Ovary (tissue), 10 donors: ENCODE measurements at regions of chr11 and their contacts with region 1.

Region 1: DNA sequence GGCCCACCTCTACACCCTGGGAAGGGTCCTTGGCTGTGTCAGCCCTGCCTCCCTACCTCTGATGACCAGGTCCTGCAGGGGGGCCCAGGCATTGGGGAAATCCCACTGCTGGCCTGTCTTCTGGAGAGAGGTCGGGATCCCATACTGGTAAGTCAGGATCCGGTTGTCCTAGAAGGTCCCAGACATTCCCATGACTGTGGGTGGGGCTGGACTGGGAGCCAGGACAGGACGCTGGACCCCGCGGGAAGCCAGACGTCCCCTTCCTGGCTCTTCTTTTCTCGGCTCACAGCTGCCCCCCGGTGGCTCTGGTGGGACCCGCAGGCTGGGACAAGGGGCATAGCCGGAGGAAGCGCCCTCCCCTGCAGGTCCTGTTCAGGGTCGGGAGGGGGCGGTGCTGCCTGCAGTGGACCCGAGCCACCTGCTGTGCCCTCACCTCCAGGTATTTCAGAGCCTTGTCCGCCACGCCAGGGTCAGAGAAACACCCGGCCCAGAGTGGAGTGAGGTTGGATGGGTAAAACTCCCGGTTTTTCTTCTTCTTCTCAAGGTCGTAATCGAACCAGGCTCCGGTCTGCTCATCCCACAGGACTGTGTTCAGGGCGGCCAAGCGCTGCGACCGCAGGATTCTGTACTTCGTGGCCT is 20.0 kb downstream of the TREH start:
- DNase-seq: peak; percentile 90 to 96 (median 95)
- H3K4me3 ChIP-seq: peak overlapping the region; percentile 3
- H3K27ac ChIP-seq: peak overlapping the region; percentile 40 to 58
- H3K4me1 ChIP-seq: no peaks in the 10 kb centered on the region
- H3K27me3 ChIP-seq: no peaks in the 10 kb centered on the region
- CTCF ChIP-seq: peak; percentile 94 to 97 (median 95)
- EP300 ChIP-seq: no peak
- POLR2A ChIP-seq: no peak

Region 2: GRCh38 chr11:118592616-118593367 is 66.6 kb before region 1 on chr11:
- intact Hi-C with region 1: loop called in 2 of 4 experiments (anchors 2 to 5 kb)
- DNase-seq: no peak
- H3K4me3 ChIP-seq: no peak overlapping the region
- H3K27ac ChIP-seq: no peak overlapping the region
- H3K4me1 ChIP-seq: no peaks in the 10 kb centered on the region
- H3K27me3 ChIP-seq: no peaks in the 10 kb centered on the region
- CTCF ChIP-seq: no peak
- EP300 ChIP-seq: no peak
- POLR2A ChIP-seq: no peak

Region 3: DNA sequence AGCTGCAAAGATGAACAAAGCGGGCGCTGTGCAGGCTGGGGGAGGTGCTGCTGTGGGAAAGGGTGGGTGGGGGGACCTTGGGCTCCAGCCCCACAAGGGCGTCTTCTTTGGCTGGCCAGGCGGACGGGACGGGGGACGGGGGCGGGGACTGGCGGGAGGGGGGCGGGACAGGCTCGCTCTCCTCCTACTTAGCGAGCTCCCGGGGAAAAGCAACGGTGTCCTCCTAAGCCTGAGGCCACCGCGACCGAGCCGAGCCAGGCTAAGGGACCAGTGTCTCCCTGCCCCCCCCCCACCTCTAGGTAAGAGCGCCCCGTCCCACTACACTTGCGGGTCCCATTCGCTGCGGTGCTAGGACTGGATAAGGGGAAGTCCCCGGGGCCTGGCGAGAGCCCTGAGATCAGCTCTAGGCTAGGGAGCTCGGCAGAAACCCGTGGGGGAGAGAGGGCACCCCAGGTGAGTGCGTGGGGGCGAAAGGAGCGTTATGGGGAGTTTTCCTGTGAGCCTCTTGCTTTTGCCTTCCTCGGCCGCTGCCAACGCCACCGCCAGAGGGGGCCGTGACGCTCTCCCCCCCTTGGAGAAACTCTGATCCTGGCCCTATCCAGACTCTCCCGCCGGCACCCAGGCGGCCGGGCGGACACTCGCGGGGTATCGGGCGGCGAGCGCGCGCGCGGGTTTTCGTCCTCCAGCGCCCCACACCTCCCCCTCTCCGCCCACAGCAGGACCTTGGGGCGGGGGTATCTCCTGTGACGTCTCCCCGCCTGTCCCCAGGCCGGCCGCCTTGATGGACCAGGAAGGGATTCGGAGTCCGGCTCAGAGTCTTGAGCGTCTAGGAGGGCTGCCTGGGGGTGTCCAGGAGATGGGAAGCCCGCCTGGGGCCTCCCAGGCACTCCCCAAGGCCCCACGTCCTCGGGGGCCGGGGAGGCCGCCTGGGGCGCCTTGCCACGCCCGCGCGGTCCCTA is 51.8 kb before region 1 on chr11 and contains the start of gene PHLDB1:
- intact Hi-C with region 1: no loop called
- DNase-seq: peak; percentile 79 to 87 (median 81)
- H3K4me3 ChIP-seq: peak within 1 kb of the TSS; percentile 76
- H3K27ac ChIP-seq: peak within 1 kb of the TSS; percentile 97 to 98
- H3K4me1 ChIP-seq: peaks cover 16% of the 10 kb centered on the region
- H3K27me3 ChIP-seq: no peaks in the 10 kb centered on the region
- CTCF ChIP-seq: peak; percentile 34 to 52 (median 42)
- EP300 ChIP-seq: no peak
- POLR2A ChIP-seq: peak; percentile 71
- total RNA-seq, gene PHLDB1: 69.4 to 265 (median 139) TPM

Region 4: DNA sequence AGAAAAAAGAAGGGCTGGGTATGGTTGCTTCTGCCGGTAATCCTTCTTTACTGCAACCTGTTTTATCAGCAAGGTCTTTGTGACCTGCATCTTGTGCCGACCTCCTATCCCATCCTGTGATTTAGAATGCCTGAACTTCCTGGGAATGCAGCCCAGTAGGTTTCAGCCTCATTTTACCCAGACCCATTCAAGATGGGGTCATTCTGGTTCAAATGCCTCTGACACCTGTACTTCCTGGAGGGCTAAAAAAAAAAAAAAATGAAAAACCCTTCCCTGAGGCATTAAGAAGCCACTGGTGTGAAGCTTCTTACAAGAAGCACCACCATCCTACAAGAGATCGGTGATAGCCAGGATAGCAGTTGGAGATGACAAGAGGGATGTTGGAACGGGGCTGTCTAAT is 74.6 kb after region 1 on chr11:
- intact Hi-C with region 1: no loop called
- DNase-seq: no peak
- H3K4me3 ChIP-seq: no peak overlapping the region
- H3K27ac ChIP-seq: no peak overlapping the region
- H3K4me1 ChIP-seq: no peaks in the 10 kb centered on the region
- H3K27me3 ChIP-seq: no peaks in the 10 kb centered on the region
- CTCF ChIP-seq: no peak
- EP300 ChIP-seq: no peak
- POLR2A ChIP-seq: no peak

Region 5: DNA sequence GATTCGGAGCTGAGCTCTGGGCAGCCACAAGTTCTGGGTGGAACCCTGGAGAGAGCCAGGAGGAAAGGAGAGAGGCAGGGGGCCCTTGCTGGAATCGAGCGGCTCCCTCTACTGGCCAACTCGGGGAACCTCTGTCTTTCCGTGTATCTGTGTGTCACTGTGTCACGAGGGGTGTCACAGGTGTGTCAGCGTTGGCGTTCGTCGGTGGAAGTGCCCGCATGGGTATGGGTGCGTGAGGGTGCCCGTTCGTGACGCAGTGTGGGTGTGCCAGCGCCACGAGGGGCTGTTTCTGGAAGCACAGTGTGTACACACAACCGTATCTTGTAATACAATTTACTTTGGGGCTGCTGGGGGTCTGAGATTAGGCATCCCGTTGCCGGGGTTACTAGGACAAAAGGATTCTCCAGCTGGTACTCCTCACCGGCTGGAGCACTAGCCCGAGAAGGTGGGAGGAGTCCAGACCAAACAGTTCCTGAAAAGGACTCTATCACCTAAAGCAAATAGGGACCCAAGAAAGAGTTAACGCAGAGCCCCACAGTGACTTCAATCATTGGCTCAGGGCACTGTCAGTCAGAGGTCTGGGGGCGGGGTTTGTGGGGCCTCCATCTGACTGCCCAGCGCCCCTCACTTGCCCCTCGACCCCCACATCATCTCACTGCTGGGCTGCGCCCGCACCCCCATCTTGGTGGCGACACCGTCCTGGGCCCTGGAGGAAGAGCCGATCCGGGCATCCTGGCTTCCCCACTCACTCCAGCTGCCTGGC is 268.9 kb after region 1 on chr11:
- intact Hi-C with region 1: no loop called
- DNase-seq: peak; percentile 92 to 95 (median 95)
- H3K4me3 ChIP-seq: peak overlapping the region; percentile 98
- H3K27ac ChIP-seq: peak overlapping the region; percentile 76 to 90
- H3K4me1 ChIP-seq: peaks cover 3% of the 10 kb centered on the region
- H3K27me3 ChIP-seq: no peaks in the 10 kb centered on the region
- CTCF ChIP-seq: peak; percentile 88 to 98 (median 98)
- EP300 ChIP-seq: no peak
- POLR2A ChIP-seq: peak; percentile 35